Common myeloid progenitor, CD34-positive (primary cell): ENCODE measurements at regions of chr14 and their contacts with region 1.

Region 1: DNA sequence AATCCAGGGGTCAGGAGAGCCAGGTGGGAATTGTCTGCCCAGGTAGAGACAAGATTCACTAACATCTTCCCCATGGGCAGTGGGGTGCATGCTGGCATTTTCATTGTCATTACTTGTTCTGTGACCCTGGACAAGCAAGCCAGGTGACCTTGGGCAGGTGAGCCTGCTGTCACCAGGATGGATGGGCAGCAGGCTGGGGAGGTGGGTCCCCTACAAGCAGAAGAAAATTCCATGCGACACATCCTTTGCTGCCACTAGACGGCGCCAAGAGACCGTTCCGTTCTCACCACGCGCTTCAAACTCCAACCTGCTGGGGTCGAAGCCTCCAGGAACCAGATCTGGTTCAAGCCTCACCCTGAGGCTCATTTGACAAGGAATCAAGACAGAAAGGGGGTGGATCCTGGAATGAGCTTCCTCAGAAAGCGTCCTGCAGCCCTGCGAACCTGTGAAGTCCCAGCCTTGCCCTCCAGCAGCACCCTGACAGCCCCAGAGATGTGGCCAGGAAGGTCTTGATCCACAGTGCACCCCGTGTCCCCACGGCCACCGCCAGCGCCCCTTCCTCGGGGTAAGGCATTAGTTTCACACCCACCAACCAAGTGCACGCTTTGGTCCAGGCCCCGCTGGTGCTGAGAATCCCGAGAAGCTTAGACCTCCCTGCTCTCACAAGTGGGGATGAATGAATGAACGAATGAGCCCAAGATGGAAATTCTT is 3.2 kb upstream of the DYNC1H1 start:
- DNase-seq: peak; percentile 84 to 92 (median 86)
- H3K4me3 ChIP-seq: no peak overlapping the region
- H3K27ac ChIP-seq: no peak overlapping the region
- H3K4me1 ChIP-seq: peaks cover 6 to 15% (median 10%) of the 10 kb centered on the region in 4 experiments
- H3K27me3 ChIP-seq: no peaks in the 10 kb centered on the region

Region 2: DNA sequence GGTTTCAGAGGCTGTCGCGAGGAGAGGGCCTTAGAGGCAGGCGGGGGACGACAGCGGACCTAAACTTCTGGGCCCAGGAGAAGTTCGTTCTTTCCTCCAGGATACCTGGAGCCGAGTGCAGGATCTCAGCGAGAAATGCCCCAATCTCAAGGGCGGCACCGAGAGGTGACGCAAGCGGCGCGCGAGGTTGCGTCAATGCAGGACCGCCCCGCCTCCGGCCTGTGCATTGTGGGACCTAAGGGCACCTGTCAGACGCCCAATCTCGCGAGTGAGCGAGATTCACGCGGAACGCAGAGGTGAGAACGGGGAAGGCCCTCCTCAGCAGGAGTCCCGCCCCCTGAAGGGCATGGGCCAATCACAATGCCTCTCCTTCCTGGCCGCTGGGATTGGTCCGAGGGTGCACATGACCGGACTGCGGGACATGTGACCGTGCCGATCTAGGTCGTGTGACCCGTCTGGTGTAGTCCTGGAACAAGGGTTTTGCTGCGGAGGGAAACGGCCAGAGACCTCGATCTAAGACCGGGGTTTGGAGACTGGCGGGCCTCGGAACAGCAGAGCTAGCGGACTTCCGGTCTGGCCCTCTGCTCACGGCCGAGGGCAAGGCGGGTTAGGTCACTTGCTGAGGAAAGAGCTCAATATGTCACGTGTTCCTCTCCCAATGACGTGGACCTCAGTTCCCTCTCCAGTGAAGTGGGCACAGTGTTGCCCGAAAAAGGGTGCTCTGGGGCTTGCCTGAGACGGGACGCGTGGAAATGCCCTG is 13.1 kb before region 1 on chr14:
- CTCF ChIA-PET with region 1: interaction called, 11 read pairs
- POLR2A ChIA-PET with region 1: no interaction called
- DNase-seq: peak; percentile 100
- H3K4me3 ChIP-seq: peak overlapping the region; percentile 61 to 100 (median 94)
- H3K27ac ChIP-seq: peak overlapping the region; percentile 94 to 98
- H3K4me1 ChIP-seq: peaks cover 0 to 20% (median 18%) of the 10 kb centered on the region in 4 experiments
- H3K27me3 ChIP-seq: peaks cover 0 to 32% (median 5%) of the 10 kb centered on the region in 5 experiments

Region 3: GRCh38 chr14:101972268-101972774 is 11.2 kb after region 1 on chr14:
- CTCF ChIA-PET with region 1: interaction called, 16 read pairs
- POLR2A ChIA-PET with region 1: no interaction called
- DNase-seq: peak in 2 of 3 donors; percentile 36 to 47
- H3K4me3 ChIP-seq: no peak overlapping the region
- H3K27ac ChIP-seq: peak overlapping the region in 1 of 2 experiments; percentile 14
- H3K4me1 ChIP-seq: peaks cover 0 to 8% (median 2%) of the 10 kb centered on the region in 4 experiments
- H3K27me3 ChIP-seq: no peaks in the 10 kb centered on the region

Region 4: GRCh38 chr14:102016420-102017090 is 55.4 kb after region 1 on chr14:
- CTCF ChIA-PET with region 1: no interaction called
- POLR2A ChIA-PET with region 1: no interaction called
- DNase-seq: no peak
- H3K4me3 ChIP-seq: no peak overlapping the region
- H3K27ac ChIP-seq: no peak overlapping the region
- H3K4me1 ChIP-seq: no peaks in the 10 kb centered on the region
- H3K27me3 ChIP-seq: no peaks in the 10 kb centered on the region

Region 5: DNA sequence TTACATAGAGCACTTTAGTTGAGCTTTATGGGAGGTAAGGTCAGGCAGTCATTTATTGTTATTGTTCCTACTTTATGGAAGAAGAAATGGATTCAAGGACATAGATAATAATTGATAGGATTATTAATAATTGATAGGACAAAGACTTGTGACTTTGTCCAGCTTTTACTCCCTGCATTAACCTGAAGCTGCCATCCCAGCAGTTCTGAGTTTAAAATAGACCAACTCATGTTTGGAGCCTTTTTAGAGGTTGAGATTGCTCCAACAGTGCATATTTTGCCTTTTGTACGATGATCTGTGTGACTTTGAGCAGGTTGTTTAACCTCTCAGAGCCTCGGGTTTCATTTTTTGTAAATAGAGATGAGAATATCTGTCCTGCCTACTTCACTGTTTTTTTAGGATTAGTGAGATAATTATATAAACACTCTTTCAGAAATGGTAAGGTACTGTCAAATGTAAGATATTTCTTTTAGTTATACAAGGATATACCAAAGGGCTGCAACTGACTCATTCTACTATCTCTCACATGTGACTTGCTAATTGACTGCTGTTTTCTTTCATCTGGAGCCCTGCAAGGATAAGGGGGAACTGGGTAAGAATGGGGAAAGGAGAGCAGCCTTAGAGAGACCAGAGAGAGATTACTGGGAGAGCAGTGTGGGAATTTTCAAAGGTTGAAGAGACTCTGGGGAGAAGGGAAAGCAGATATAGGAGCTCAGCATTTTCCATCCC is 193.8 kb after region 1 on chr14:
- CTCF ChIA-PET with region 1: no interaction called
- POLR2A ChIA-PET with region 1: no interaction called
- DNase-seq: no peak
- H3K4me3 ChIP-seq: no peak overlapping the region
- H3K27ac ChIP-seq: peak overlapping the region in 1 of 2 experiments; percentile 28
- H3K4me1 ChIP-seq: no peaks in the 10 kb centered on the region
- H3K27me3 ChIP-seq: no peaks in the 10 kb centered on the region